ENCODE measurements at regions of chr2 and their contacts with region 1.

Region 1: GRCh38 chr2:80499095-80499494 is 194.5 kb upstream of the LRRTM1 start:
- DNase-seq: peak; percentile 37 to 47
- H3K4me3 ChIP-seq: no peak overlapping the region
- H3K4me3 Mint-ChIP-seq: no peak overlapping the region
- H3K27ac Mint-ChIP-seq: no peak overlapping the region
- H3K4me1 ChIP-seq: no peaks in the 10 kb centered on the region
- H3K4me1 Mint-ChIP-seq: no peaks in the 10 kb centered on the region
- H3K27me3 ChIP-seq: no peaks in the 10 kb centered on the region
- H3K27me3 Mint-ChIP-seq: peaks cover 17% of the 10 kb centered on the region
- CTCF ChIP-seq: peak; percentile 47 to 68

Region 2: DNA sequence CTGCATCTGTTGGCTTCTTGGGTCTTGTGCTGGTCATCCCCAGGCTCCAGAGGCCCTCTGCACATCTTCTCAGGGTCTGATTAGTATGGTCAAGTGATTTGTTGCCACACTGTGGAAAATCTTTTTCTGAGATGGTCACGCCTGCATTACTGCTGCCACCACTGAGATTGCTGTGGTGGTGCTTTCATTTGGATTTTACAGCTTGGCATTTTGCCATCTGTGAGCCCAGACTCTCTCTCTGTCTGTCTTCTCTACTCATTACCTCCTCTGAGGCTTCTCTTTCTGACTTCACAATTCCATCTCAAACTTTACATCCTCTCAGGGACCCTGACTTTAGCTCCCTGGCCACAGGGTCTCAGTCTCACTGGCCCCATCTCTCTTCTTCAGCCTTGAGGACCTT is 349.1 kb before region 1 on chr2:
- CTCF ChIA-PET with region 1: no interaction called
- POLR2A ChIA-PET with region 1: no interaction called
- intact Hi-C with region 1: loop called (anchors 5 kb)
- DNase-seq: no peak
- H3K4me3 ChIP-seq: no peak overlapping the region
- H3K4me3 Mint-ChIP-seq: no peak overlapping the region
- H3K27ac Mint-ChIP-seq: no peak overlapping the region
- H3K4me1 ChIP-seq: peaks cover 5% of the 10 kb centered on the region; the same call in 1 of the 2 replicates
- H3K4me1 Mint-ChIP-seq: peaks cover 2% of the 10 kb centered on the region
- H3K27me3 ChIP-seq: no peaks in the 10 kb centered on the region
- H3K27me3 Mint-ChIP-seq: no peaks in the 10 kb centered on the region
- CTCF ChIP-seq: no peak

Region 3: DNA sequence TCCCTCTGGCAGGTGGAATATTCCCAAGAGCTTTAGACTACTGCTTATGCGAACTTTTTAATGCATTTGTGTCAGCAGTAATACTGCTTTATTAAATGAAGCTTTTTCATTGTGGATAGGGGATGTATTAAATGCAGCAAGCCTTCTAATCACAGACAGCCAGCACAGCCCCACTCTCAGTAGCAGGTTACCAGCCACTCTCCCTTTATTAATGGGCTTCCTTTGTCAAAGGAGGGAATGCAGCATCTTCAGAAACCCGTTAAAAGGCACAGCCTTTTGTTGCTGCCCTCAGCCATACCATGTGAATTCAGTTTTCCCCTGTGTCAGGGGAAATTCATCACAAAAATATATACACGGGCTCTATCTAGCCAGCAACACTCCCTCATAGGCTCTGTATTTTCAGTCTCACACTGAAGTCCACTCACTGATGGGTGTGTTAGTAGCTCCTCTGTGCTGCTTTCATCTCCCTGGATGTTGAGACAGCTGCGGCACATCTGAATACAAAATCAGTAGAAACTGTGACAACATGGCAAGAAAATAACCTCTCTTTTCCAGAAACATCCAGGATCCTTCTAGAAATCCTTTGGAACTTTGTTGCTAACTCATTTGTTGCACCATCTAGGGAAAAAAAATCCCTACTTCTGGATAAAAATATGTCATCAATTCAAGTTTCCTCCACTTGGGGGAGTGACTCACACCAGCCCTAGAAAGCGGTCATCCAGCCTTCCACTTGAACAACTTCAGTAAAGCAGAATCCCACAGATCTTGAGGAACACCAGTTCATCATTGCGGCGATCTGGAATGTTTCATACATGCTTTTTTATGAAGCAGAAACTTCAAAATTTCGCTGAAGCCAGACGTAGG is 242.9 kb before region 1 on chr2:
- CTCF ChIA-PET with region 1: no interaction called
- POLR2A ChIA-PET with region 1: no interaction called
- intact Hi-C with region 1: loop called (anchors 1 kb)
- DNase-seq: peak in 1 of 2 experiments; percentile 29
- H3K4me3 ChIP-seq: no peak overlapping the region
- H3K4me3 Mint-ChIP-seq: no peak overlapping the region
- H3K27ac Mint-ChIP-seq: no peak overlapping the region
- H3K4me1 ChIP-seq: no peaks in the 10 kb centered on the region
- H3K4me1 Mint-ChIP-seq: no peaks in the 10 kb centered on the region
- H3K27me3 ChIP-seq: no peaks in the 10 kb centered on the region
- H3K27me3 Mint-ChIP-seq: no peaks in the 10 kb centered on the region
- CTCF ChIP-seq: peak in 1 of 2 experiments; percentile 50

Region 4: GRCh38 chr2:80288576-80288975 is 210.5 kb before region 1 on chr2:
- CTCF ChIA-PET with region 1: interaction called, 11 read pairs
- POLR2A ChIA-PET with region 1: no interaction called
- intact Hi-C with region 1: no loop called
- DNase-seq: no peak
- H3K4me3 ChIP-seq: no peak overlapping the region
- H3K4me3 Mint-ChIP-seq: no peak overlapping the region
- H3K27ac Mint-ChIP-seq: no peak overlapping the region
- H3K4me1 ChIP-seq: no peaks in the 10 kb centered on the region
- H3K4me1 Mint-ChIP-seq: no peaks in the 10 kb centered on the region
- H3K27me3 ChIP-seq: no peaks in the 10 kb centered on the region
- H3K27me3 Mint-ChIP-seq: peaks cover 20% of the 10 kb centered on the region
- CTCF ChIP-seq: no peak

Region 5: GRCh38 chr2:80326214-80326613 is 172.9 kb before region 1 on chr2:
- CTCF ChIA-PET with region 1: interaction called, 11 read pairs
- POLR2A ChIA-PET with region 1: no interaction called
- intact Hi-C with region 1: loop called (anchors 1 kb)
- DNase-seq: peak in 1 of 2 experiments; percentile 3
- H3K4me3 ChIP-seq: no peak overlapping the region
- H3K4me3 Mint-ChIP-seq: no peak overlapping the region
- H3K27ac Mint-ChIP-seq: no peak overlapping the region
- H3K4me1 ChIP-seq: no peaks in the 10 kb centered on the region
- H3K4me1 Mint-ChIP-seq: no peaks in the 10 kb centered on the region
- H3K27me3 ChIP-seq: no peaks in the 10 kb centered on the region
- H3K27me3 Mint-ChIP-seq: peaks cover 1% of the 10 kb centered on the region
- CTCF ChIP-seq: peak; percentile 20 to 38